Activated B cell treated with CpG ODN at 0.5 μM for 24 hours (primary cell): ENCODE measurements at regions of chr1 and their contacts with region 1.

Region 1: GRCh38 chr1:150363426-150364230 is at the start of gene RPRD2:
- DNase-seq: peak; percentile 90
- ATAC-seq: peak; percentile 93
- H3K4me3 Mint-ChIP-seq: peak within 1 kb of the TSS; percentile 95
- H3K27ac Mint-ChIP-seq: peak within 1 kb of the TSS; percentile 98
- H3K4me1 Mint-ChIP-seq: peaks cover 37% of the 10 kb centered on the region
- H3K27me3 Mint-ChIP-seq: no peaks in the 10 kb centered on the region
- CTCF ChIP-seq: no peak
- total RNA-seq, gene RPRD2: 27.1 and 28.6 TPM in 2 replicates

Region 2: GRCh38 chr1:150021191-150021694 is 342.4 kb before region 1 on chr1:
- CTCF ChIA-PET with region 1: no interaction called
- POLR2A ChIA-PET with region 1: no interaction called
- intact Hi-C with region 1: no loop called
- DNase-seq: no peak
- ATAC-seq: no peak
- H3K4me3 Mint-ChIP-seq: no peak overlapping the region
- H3K27ac Mint-ChIP-seq: no peak overlapping the region
- H3K4me1 Mint-ChIP-seq: peaks cover 9% of the 10 kb centered on the region
- H3K27me3 Mint-ChIP-seq: peaks cover 15% of the 10 kb centered on the region
- CTCF ChIP-seq: no peak

Region 3: DNA sequence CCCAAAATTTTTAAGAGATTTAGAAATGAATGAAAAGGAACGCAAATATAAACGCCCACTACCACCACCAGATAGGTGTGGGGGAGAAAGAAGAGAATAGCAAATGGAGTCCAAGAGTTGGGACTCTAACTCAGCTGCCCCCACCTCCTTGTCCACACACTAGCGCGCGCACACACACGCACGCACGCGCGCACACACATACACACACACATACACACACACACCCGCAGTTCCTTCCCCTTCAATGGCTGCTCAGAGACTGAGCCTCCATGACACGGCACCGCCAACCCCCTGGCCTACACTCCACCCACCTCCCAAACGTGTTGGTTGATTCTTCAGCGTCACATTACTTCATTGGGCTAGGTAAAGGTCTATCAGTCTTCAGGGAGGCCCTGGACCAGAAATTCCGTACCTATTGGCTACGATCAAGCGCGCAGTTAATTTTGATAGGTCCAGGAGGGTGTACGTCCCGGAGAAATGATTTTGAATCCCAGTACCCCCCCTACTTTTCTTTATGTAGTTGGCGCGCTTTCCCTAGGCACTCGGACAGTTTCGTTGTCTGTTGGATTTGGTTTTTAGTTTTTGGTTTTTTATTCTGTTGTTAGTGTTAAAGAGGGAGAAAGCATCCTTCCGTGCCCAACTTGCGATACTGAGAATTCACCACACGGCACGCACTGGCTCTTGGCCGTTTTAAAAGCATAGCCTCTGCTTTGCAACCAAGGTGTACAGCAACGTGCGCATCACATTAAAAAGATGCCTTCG is 127.6 kb before region 1 on chr1 and contains the start of gene ANP32E:
- CTCF ChIA-PET with region 1: no interaction called
- POLR2A ChIA-PET with region 1: interaction called, 22 read pairs
- intact Hi-C with region 1: loop called (anchors 1 kb)
- DNase-seq: peak; percentile 82
- ATAC-seq: peak; percentile 88
- H3K4me3 Mint-ChIP-seq: no peak within 1 kb of the TSS
- H3K27ac Mint-ChIP-seq: no peak within 1 kb of the TSS
- H3K4me1 Mint-ChIP-seq: peaks cover 22% of the 10 kb centered on the region
- H3K27me3 Mint-ChIP-seq: peaks cover 2% of the 10 kb centered on the region
- CTCF ChIP-seq: no peak
- total RNA-seq, gene ANP32E: 70.5 and 84.3 TPM in 2 replicates

Region 4: DNA sequence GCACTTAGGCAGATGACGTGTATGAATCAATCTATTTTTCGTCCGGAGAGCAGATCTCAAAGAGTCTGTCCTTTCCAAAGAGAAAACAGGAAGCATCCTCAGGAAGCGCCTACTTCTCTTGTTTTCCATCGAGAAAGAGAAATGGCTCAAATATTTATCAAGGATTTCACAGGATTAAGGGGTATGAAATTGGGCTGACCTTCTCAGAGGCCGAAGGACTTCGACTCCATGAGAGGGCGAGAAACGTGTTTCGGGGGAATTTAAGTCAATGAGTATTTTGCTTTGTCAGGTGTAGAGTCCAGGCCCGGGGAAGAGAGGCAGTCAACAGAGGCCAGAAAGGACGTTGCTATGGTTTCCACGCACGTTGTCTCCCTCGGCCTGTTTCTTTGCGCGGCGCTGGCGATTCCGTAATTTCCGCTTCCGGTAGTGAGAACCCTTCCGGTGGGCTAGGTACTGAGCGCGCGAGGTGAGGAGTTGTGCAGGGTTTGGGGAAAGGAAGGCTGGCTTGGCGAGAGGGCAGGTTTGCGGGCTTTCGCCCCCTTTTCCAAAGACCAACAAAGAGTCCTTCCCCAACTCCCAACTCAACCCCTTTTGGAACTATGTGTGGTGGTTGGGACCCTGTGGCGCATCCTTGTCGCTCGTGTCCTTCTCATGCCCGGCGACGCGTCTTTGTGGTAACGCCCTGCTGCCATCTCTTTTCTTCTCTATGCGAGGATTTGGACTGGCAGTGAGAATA is 70.0 kb before region 1 on chr1 and contains the start of gene MRPS21:
- CTCF ChIA-PET with region 1: no interaction called
- POLR2A ChIA-PET with region 1: interaction called, 3 read pairs
- intact Hi-C with region 1: loop called (anchors 1 kb)
- DNase-seq: peak; percentile 77
- ATAC-seq: peak; percentile 97
- H3K4me3 Mint-ChIP-seq: peak within 1 kb of the TSS; percentile 94
- H3K27ac Mint-ChIP-seq: peak within 1 kb of the TSS; percentile 99
- H3K4me1 Mint-ChIP-seq: peaks cover 30% of the 10 kb centered on the region
- H3K27me3 Mint-ChIP-seq: no peaks in the 10 kb centered on the region
- CTCF ChIP-seq: no peak
- total RNA-seq, gene MRPS21: 66.8 and 69.2 TPM in 2 replicates

Region 5: GRCh38 chr1:150387200-150387599 is 23.6 kb after region 1 on chr1:
- CTCF ChIA-PET with region 1: no interaction called
- POLR2A ChIA-PET with region 1: interaction called, 12 read pairs
- intact Hi-C with region 1: no loop called
- DNase-seq: no peak
- ATAC-seq: no peak
- H3K4me3 Mint-ChIP-seq: no peak overlapping the region
- H3K27ac Mint-ChIP-seq: no peak overlapping the region
- H3K4me1 Mint-ChIP-seq: peaks cover 30% of the 10 kb centered on the region
- H3K27me3 Mint-ChIP-seq: no peaks in the 10 kb centered on the region
- CTCF ChIP-seq: no peak

Region 6: GRCh38 chr1:150561974-150562445 is 198.4 kb after region 1 on chr1:
- CTCF ChIA-PET with region 1: no interaction called
- POLR2A ChIA-PET with region 1: interaction called, 14 read pairs
- intact Hi-C with region 1: no loop called
- DNase-seq: peak; percentile 79
- ATAC-seq: peak; percentile 43
- H3K4me3 Mint-ChIP-seq: peak overlapping the region; percentile 96
- H3K27ac Mint-ChIP-seq: peak overlapping the region; percentile 98
- H3K4me1 Mint-ChIP-seq: peaks cover 63% of the 10 kb centered on the region
- H3K27me3 Mint-ChIP-seq: no peaks in the 10 kb centered on the region
- CTCF ChIP-seq: no peak

Region 7: GRCh38 chr1:150925816-150926741 is 562.5 kb after region 1 on chr1 and contains the start of gene SETDB1:
- CTCF ChIA-PET with region 1: no interaction called
- POLR2A ChIA-PET with region 1: interaction called, 5 read pairs
- intact Hi-C with region 1: loop called (anchors 5 kb)
- DNase-seq: peak; percentile 79
- ATAC-seq: peak; percentile 90
- H3K4me3 Mint-ChIP-seq: peak within 1 kb of the TSS; percentile 98
- H3K27ac Mint-ChIP-seq: peak within 1 kb of the TSS; percentile 98
- H3K4me1 Mint-ChIP-seq: peaks cover 35% of the 10 kb centered on the region
- H3K27me3 Mint-ChIP-seq: no peaks in the 10 kb centered on the region
- CTCF ChIP-seq: no peak
- total RNA-seq, gene SETDB1: 101 and 105 TPM in 2 replicates